Dendritic cell treated with granulocyte-macrophage colony-stimulating factor and Interleukin-4, amounts not matched to agents 40 ng/mL and 50 ng/mL, for 4 days (primary cell): ENCODE measurements at regions of chr3 and their contacts with region 1.

Region 1: DNA sequence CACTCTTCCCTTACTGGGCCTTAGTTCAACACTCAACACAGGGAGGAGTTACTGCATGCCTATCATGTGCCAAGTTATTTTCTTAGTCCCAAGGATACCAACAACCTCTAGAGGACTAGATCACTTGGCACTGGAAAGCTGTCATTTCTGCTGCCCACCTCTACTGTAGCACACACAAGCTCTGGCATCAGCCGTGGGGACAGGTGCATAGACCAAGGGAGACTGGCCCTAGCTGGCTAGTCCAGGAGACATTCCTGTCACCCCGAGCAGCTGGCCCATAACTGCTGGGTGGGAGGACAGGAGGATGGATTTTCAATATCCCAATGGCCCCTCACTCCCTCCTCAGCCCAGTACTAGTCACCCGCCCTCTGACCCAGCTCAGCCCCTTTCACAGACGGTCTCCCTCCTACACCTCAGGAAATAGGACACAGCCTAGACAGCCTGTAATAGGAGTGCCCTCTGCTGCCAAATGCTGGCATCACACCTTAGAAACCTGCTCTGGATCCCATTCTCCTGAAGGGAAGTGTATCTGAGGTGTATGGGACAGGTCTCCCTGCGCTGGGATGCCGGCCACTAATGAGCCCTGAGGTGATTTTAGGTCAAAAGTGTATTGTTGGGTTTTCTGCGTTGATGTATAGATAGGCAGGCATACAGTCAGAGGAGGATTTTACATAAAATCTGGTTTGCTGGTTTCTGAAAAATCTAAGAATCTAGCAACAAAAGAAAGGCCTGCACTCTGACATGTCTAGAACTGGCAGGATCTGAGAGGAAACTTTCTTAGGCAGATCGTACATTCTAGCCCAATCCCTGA is 3.4 kb upstream of the DZIP1L start:
- H3K4me3 Mint-ChIP-seq: no peak overlapping the region
- H3K27ac Mint-ChIP-seq: no peak overlapping the region
- H3K4me1 Mint-ChIP-seq: peaks cover 50% of the 10 kb centered on the region
- H3K27me3 Mint-ChIP-seq: no peaks in the 10 kb centered on the region

Region 2: GRCh38 chr3:138148503-138148902 is 29.7 kb after region 1 on chr3:
- intact Hi-C with region 1: loop called (anchors 2 kb)
- H3K4me3 Mint-ChIP-seq: no peak overlapping the region
- H3K27ac Mint-ChIP-seq: no peak overlapping the region
- H3K4me1 Mint-ChIP-seq: peaks cover 5% of the 10 kb centered on the region
- H3K27me3 Mint-ChIP-seq: no peaks in the 10 kb centered on the region

Region 3: GRCh38 chr3:138174421-138175122 is 55.8 kb after region 1 on chr3 and contains the start of gene DBR1:
- intact Hi-C with region 1: loop called (anchors 1 kb)
- H3K4me3 Mint-ChIP-seq: peak within 1 kb of the TSS; percentile 89
- H3K27ac Mint-ChIP-seq: peak within 1 kb of the TSS; percentile 92
- H3K4me1 Mint-ChIP-seq: peaks cover 21% of the 10 kb centered on the region
- H3K27me3 Mint-ChIP-seq: peaks cover 5% of the 10 kb centered on the region

Region 4: GRCh38 chr3:138186803-138187295 is 68.0 kb after region 1 on chr3:
- intact Hi-C with region 1: loop called (anchors 5 kb)
- H3K4me3 Mint-ChIP-seq: peak overlapping the region; percentile 94
- H3K27ac Mint-ChIP-seq: peak overlapping the region; percentile 97
- H3K4me1 Mint-ChIP-seq: peaks cover 36% of the 10 kb centered on the region
- H3K27me3 Mint-ChIP-seq: peaks cover 7% of the 10 kb centered on the region

Region 5: DNA sequence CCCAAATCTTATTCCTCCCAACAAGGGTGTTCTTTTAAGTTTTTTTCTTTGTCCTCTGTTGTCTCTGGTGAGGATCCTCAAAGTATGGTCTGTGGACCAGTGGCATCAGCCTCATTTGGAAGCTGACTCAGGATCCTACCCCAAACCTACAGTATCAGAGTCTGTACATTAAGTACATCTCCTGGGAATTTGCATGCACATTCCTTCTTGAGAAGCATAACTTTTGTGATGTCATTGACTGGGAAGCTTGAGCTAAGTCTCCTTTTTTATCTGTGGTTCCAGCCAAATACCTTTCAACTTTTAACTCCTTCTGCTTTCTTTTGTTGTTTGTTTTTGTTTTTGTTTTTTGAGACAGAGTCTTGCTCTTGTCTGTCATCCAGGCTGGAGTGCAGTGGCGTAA is 108.8 kb after region 1 on chr3:
- intact Hi-C with region 1: loop called (anchors 10 kb)
- H3K4me3 Mint-ChIP-seq: no peak overlapping the region
- H3K27ac Mint-ChIP-seq: no peak overlapping the region
- H3K4me1 Mint-ChIP-seq: peaks cover 3% of the 10 kb centered on the region
- H3K27me3 Mint-ChIP-seq: no peaks in the 10 kb centered on the region

Region 6: DNA sequence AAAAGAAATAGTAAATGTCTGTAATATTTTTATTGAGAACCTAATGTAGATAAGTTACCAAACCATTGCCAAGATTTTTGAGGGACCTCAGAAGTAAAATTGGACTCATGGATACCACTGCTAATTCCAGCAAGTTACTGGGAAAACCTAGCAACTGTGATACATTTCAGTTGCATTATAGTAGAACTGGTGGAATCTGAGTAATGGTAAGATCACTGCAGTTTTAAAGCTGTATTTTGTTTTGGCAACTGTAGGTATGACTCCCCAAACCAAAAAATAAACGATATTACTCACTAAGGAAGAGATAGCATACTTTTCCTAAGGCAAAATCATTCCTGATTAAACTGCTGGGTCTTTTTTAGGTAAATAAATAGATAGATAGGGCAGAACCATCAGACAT is 122.2 kb after region 1 on chr3:
- intact Hi-C with region 1: no loop called
- H3K4me3 Mint-ChIP-seq: no peak overlapping the region
- H3K27ac Mint-ChIP-seq: no peak overlapping the region
- H3K4me1 Mint-ChIP-seq: no peaks in the 10 kb centered on the region
- H3K27me3 Mint-ChIP-seq: no peaks in the 10 kb centered on the region